ENCODE measurements at regions of chr17 and their contacts with region 1.

Region 1: DNA sequence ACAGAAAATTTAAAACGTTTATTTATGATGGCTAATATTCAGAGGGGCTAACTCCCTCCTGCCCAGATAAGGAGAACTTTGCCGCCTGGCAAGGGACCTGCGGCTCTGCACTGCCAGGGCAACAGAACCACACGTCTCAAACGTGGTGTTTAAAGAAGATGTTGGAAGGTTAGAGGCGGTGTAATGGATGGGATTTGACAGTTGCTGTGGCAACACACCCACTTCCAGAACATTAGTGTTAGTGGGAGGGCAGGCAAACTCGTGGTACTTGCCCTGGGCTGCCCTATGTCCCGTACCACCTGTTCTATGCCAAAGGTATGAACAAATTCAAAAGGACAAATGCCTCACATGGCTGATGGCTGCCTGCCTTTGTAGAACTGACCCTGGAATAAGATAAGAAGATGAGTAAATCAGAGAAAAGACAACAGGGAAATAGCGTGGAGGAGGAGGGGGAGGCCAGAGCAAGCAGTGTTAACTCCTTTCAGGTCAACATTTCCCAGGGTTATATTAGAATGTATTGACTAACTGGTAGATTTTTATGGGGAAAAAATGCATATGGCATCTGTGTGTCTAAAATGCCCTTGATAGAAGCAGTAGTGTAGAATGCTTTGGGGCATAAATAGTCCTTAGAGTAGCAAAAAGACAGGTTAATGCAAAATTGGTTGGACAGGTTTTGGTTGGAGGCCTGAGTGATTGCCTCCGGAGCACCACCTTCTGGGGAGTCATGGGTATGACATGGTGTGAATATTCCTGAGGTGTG is 30.8 kb downstream of the HLF start:
- DNase-seq: peak; percentile 87
- H3K4me3 Mint-ChIP-seq: no peak overlapping the region
- H3K27ac Mint-ChIP-seq: no peak overlapping the region
- H3K4me1 Mint-ChIP-seq: no peaks in the 10 kb centered on the region
- H3K27me3 Mint-ChIP-seq: peaks cover 4% of the 10 kb centered on the region

Region 2: GRCh38 chr17:55348749-55349354 is 53.3 kb after region 1 on chr17:
- intact Hi-C with region 1: loop called (anchors 5 kb)
- DNase-seq: peak; percentile 83
- H3K4me3 Mint-ChIP-seq: no peak overlapping the region
- H3K27ac Mint-ChIP-seq: no peak overlapping the region
- H3K4me1 Mint-ChIP-seq: peaks cover 42% of the 10 kb centered on the region
- H3K27me3 Mint-ChIP-seq: peaks cover 2% of the 10 kb centered on the region

Region 3: DNA sequence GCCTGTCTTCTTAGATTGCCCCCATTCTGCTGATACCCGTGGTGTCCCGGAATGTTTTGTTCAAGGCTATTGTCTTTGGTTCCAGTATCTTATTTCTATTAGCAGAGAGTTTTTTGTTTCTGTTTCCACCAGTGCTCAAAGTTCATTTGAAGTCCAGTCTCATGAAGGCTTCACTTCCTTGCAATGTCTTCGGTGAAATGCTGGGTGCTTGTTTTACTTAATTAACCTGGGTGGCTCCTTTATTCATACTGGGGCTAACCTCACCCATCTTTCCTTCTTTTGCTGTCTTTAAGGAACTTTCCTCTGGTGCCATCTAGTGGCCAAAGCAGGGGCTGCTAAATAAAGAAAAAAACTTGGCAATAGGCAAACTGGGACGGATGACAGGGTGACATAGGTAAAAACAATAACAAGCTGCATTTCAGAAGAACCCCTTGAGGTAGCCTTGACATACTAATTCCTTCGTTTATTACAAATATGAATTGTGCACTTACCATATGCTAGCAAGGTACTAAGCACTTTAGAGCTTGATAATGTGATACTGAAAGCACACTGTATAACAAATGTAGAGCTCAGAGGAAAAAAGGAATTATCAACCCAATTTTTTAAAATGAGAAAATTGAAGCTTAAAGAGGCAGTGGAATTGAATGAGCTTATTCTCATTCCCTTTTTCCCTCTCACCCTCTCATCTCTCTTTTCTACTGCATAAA is 218.4 kb after region 1 on chr17:
- intact Hi-C with region 1: loop called (anchors 5 kb)
- DNase-seq: peak; percentile 92
- H3K4me3 Mint-ChIP-seq: no peak overlapping the region
- H3K27ac Mint-ChIP-seq: no peak overlapping the region
- H3K4me1 Mint-ChIP-seq: peaks cover 3% of the 10 kb centered on the region
- H3K27me3 Mint-ChIP-seq: peaks cover 8% of the 10 kb centered on the region